ENCODE measurements at regions of chr21 and their contacts with region 1.

Region 1: DNA sequence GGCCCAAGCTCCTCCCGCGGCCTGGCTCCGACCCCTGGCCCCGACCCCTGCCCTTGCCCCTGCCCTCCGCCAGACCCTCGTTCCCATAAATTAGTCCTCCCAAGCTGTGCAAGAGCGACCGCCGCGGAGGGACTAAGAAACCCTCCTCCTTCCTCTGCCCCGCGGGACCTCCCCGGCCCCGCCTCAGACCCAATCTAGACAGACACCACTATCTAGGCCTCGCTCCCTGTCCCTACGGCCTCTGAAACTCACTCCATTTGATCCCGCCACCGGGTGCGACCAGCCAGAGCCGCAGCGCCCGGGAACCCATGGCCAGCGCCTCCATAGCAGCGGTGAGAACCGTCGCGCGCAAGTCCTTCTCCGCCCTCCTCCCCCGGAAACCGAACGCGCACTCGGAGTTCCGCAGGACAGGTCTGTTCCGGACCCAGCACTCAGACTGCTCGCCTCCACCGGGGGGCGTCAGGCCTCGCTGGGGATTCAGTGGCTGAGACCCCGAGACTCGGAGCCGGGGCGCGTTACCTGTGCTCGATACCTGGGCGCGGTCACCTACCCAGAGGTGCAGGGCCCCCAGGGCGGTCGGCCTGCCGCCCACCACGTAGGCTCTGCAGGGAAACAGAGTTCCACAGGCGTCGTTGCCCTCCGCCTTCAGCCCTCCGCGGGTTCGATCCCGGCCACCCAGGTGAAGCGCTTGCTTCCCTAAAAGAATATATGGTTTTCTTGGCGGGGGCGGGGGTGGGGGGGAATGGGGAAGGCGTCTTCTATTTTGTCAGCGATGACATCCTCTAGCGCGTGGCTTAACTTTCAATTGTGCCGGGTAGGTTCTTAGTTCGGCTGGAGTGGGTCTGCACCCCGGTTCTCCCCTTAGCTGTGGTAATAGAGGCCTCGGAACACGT is at the start of gene MRPL39:
- DNase-seq: peak; percentile 84
- H3K4me3 ChIP-seq: peak within 1 kb of the TSS; percentile 88 to 93 (median 89)
- H3K27ac ChIP-seq: peak within 1 kb of the TSS; percentile 73
- H3K4me1 ChIP-seq: peaks cover 11% of the 10 kb centered on the region
- H3K27me3 ChIP-seq: no peaks in the 10 kb centered on the region
- CTCF ChIP-seq: peak; percentile 43 to 73
- total RNA-seq, gene MRPL39: 26.2 to 53.8 TPM

Region 2: DNA sequence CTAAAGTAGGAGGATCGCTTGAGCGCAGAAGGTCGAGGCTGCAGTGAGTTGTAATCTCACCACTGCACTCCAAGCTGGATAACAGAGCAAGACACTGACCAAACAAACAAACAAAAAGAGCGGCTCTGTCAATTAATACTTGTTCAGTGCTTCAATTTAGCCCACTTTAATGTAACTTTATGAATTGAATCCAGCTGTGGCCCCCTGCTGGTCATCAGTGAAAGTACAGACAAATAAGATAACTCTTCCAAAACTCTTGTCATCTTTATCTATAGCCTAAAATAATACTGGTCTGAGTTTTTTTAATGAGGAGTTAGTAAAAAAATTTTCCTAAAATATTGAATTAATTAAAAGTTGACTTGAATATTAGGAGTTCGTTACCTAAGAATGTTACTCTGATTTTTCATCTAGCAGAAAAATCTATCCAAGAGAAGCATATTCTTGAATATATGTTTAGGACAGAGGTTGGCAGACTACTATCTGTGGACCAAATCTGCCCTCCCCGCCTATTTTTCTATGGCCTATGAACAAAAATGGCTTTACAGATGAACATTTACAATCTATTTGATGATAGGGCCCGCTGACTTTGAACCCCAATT is 101.2 kb after region 1 on chr21:
- CTCF ChIA-PET with region 1: no interaction called
- dilution Hi-C with region 1: no loop called
- in situ Hi-C with region 1: no loop called
- intact Hi-C with region 1: loop called (anchors 1 kb)
- DNase-seq: peak; percentile 8
- H3K4me3 ChIP-seq: no peak overlapping the region
- H3K27ac ChIP-seq: no peak overlapping the region
- H3K4me1 ChIP-seq: no peaks in the 10 kb centered on the region
- H3K27me3 ChIP-seq: no peaks in the 10 kb centered on the region
- CTCF ChIP-seq: peak; percentile 74 to 77

Region 3: GRCh38 chr21:25734904-25735645 is 127.7 kb after region 1 on chr21 and contains the starts of genes ATP5PF and GABPA:
- CTCF ChIA-PET with region 1: no interaction called
- dilution Hi-C with region 1: no loop called
- in situ Hi-C with region 1: loop called in 1 of 2 experiments (anchors 5 kb)
- intact Hi-C with region 1: loop called (anchors 1 kb)
- DNase-seq: peak; percentile 99
- H3K4me3 ChIP-seq: peak within 1 kb of the TSS; percentile 82 to 94 (median 91)
- H3K27ac ChIP-seq: peak within 1 kb of the TSS; percentile 89
- H3K4me1 ChIP-seq: peaks cover 13% of the 10 kb centered on the region
- H3K27me3 ChIP-seq: no peaks in the 10 kb centered on the region
- CTCF ChIP-seq: peak in 1 of 2 donors; percentile 28
- total RNA-seq, gene ATP5PF: 27.2 to 122 TPM
- total RNA-seq, gene GABPA: 13.3 to 17.3 TPM

Region 4: GRCh38 chr21:25862596-25862995 is 255.2 kb after region 1 on chr21:
- CTCF ChIA-PET with region 1: no interaction called
- dilution Hi-C with region 1: no loop called
- in situ Hi-C with region 1: loop called (anchors 10 to 25 kb)
- intact Hi-C with region 1: loop called (anchors 1 kb)
- DNase-seq: peak; percentile 19
- H3K4me3 ChIP-seq: no peak overlapping the region
- H3K27ac ChIP-seq: no peak overlapping the region
- H3K4me1 ChIP-seq: no peaks in the 10 kb centered on the region
- H3K27me3 ChIP-seq: no peaks in the 10 kb centered on the region
- CTCF ChIP-seq: peak; percentile 94 to 98

Region 5: DNA sequence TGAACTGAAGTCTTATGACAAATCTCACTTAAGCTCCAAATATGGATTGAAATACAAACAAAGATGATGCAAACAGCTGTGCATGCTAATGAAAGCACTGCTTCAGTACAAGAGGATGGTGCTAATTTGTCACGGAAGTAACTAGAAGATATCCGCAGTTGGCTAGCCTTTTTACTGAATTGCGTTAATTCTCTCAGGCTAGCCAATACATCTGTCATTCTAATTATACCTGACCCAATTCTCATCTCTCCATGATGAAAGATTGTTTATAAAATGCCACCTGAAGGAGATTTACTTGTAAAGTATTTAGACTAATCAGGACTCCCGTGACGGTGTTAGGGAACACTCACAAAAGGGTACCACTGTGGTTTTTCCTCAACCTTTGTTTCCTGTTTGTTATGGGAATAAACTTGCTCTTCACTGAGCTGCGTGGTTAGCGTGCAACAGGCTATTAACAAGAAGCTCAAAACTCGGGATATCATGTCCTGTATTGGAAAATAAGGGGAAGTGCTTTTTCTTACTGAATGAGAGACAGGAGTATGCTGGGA is 400.6 kb after region 1 on chr21:
- CTCF ChIA-PET with region 1: no interaction called
- dilution Hi-C with region 1: no loop called
- in situ Hi-C with region 1: no loop called
- intact Hi-C with region 1: no loop called
- DNase-seq: no peak
- H3K4me3 ChIP-seq: no peak overlapping the region
- H3K27ac ChIP-seq: no peak overlapping the region
- H3K4me1 ChIP-seq: no peaks in the 10 kb centered on the region
- H3K27me3 ChIP-seq: no peaks in the 10 kb centered on the region
- CTCF ChIP-seq: no peak

Region 6: GRCh38 chr21:26842976-26843932 is 1235.9 kb after region 1 on chr21:
- CTCF ChIA-PET with region 1: no interaction called
- dilution Hi-C with region 1: no loop called
- in situ Hi-C with region 1: no loop called
- intact Hi-C with region 1: loop called (anchors 5 kb)
- DNase-seq: peak; percentile 91
- H3K4me3 ChIP-seq: peak overlapping the region; percentile 70 to 85 (median 74)
- H3K27ac ChIP-seq: peak overlapping the region; percentile 80
- H3K4me1 ChIP-seq: peaks cover 27% of the 10 kb centered on the region
- H3K27me3 ChIP-seq: no peaks in the 10 kb centered on the region
- CTCF ChIP-seq: peak in 1 of 2 donors; percentile 29